Activated T-helper 1 cell treated with anti-CD3 and anti-CD28 coated beads, Interleukin-12 subunit alpha, Interleukin-12 subunit beta, Interleukin-2, Interleukin-4 antibody, amounts not matched to agents 30 ng/mL and 10 ng/mL and 1 ng/mL, durations not matched to agents 14 hours and 24 hours and 36 hours (primary cell): ENCODE measurements at regions of chr19 and their contacts with region 1.

Region 1: GRCh38 chr19:6773323-6773931 is 919 bp downstream of the VAV1 start:
- DNase-seq: peak; percentile 34
- H3K4me3 Mint-ChIP-seq: peak overlapping the region; percentile 92
- H3K27ac Mint-ChIP-seq: peak overlapping the region; percentile 93
- H3K4me1 Mint-ChIP-seq: peaks cover 62% of the 10 kb centered on the region
- H3K27me3 Mint-ChIP-seq: no peaks in the 10 kb centered on the region

Region 2: DNA sequence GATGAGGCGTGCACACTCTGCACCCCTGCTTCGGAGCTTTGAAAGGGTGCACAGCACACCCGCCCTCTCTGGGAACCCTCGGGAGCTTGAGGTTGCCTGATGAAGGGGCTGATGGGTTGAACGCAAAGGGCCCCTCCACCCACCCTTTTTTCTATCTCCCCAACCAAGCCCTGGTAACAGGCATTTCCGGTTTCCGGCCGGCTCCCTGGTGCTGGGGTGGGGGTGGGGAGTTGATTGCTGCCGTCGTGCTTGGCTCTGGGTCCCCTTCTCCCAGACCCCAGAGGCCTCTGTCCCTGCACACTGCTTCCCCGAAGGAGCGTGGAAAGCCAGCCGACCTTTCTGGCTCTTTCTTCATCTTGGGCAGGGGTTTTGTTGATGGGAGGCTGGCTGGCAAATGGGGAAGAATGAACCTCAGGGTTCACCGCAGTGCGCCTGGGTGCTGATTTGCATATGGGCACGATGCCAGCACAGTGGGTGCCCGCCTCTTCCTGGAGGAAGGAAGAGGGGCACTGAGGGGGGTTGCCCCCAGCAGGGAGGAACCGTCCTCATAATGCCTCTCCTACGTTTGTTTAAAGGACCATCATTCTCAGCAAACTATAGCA is 28.2 kb after region 1 on chr19:
- intact Hi-C with region 1: loop called (anchors 1 kb)
- DNase-seq: peak; percentile 72
- H3K4me3 Mint-ChIP-seq: peak overlapping the region; percentile 92
- H3K27ac Mint-ChIP-seq: peak overlapping the region; percentile 99
- H3K4me1 Mint-ChIP-seq: peaks cover 61% of the 10 kb centered on the region
- H3K27me3 Mint-ChIP-seq: no peaks in the 10 kb centered on the region

Region 3: GRCh38 chr19:6891761-6892385 is 118.4 kb after region 1 on chr19:
- intact Hi-C with region 1: no loop called
- DNase-seq: no peak
- H3K4me3 Mint-ChIP-seq: peak overlapping the region; percentile 6
- H3K27ac Mint-ChIP-seq: peak overlapping the region; percentile 91
- H3K4me1 Mint-ChIP-seq: peaks cover 55% of the 10 kb centered on the region
- H3K27me3 Mint-ChIP-seq: no peaks in the 10 kb centered on the region